Activated CD4-positive, alpha-beta memory T cell treated with anti-CD3 and anti-CD28 coated beads for 36 hours (primary cell): ENCODE measurements at regions of chr7 and their contacts with region 1.

Region 1: DNA sequence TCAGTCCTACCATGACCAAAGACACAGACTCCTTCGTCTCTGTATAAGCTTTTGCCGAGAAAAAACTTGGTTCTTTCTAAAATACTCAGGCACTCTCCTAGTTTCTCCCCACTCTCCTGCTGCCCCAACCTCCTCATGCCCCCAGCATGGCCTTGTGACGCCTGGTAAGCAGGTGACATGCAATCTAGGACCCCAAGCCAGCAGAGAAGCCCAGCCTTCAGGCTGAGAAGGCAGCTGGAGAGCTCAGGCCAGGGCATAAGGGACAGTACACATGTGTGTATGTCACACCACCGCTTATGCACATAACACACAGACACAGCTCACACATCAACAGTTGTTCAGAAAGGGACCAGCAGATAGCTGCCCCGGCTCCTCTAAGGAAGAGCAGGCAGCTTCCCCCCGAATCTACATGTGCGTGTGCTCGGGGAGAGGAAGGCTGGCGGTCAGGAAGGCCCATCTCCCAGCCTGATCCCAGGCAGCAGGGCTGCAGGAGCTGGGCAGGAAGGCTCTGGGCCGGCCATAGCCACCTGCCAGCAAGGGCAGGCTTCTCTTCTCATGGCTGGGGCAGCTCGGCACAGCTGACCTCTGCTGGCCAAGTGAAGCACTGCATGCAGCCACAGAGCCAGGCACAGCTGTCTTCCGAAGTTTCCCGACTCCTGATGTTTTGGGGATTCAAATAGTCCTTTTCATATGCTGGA is 8.5 kb downstream of the DDX56 start:
- DNase-seq: peak; percentile 77
- H3K4me3 Mint-ChIP-seq: no peak overlapping the region
- H3K27ac Mint-ChIP-seq: peak overlapping the region; percentile 23
- H3K4me1 Mint-ChIP-seq: peaks cover 10% of the 10 kb centered on the region
- H3K27me3 Mint-ChIP-seq: no peaks in the 10 kb centered on the region

Region 2: DNA sequence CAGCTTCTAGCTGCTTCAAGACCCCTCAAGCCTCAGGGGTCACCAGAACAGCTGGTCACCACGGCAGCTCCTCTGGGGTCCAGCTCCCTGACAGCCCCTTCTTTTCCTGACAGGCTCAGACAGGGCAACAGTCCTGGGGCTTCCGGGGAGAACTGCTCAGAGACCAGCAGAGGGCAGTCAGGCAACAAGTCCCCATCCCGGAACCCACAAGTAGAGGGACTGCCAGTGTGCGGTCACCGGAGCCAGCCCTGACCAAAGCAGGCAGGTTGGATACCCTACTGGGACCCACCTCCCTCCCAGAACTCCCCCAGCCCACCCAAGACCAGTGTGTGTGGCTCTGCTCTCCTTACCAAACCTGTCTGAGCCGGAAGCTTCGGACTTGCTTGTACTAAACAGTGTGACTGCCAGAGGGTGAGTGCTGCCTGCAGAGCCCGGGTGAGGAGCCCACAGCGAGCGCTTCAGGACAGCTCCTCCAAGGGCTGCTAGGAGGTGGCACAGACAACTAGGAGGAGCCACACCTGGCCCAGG is 324.2 kb before region 1 on chr7:
- CTCF ChIA-PET with region 1: interaction called, 43 read pairs
- POLR2A ChIA-PET with region 1: no interaction called
- intact Hi-C with region 1: loop called (anchors 1 kb)
- DNase-seq: peak; percentile 77
- H3K4me3 Mint-ChIP-seq: no peak overlapping the region
- H3K27ac Mint-ChIP-seq: no peak overlapping the region
- H3K4me1 Mint-ChIP-seq: no peaks in the 10 kb centered on the region
- H3K27me3 Mint-ChIP-seq: no peaks in the 10 kb centered on the region

Region 3: GRCh38 chr7:44257618-44258422 is 307.4 kb before region 1 on chr7:
- CTCF ChIA-PET with region 1: interaction called, 12 read pairs
- POLR2A ChIA-PET with region 1: no interaction called
- intact Hi-C with region 1: no loop called
- DNase-seq: peak; percentile 90
- H3K4me3 Mint-ChIP-seq: peak overlapping the region; percentile 52
- H3K27ac Mint-ChIP-seq: peak overlapping the region; percentile 90
- H3K4me1 Mint-ChIP-seq: peaks cover 38% of the 10 kb centered on the region
- H3K27me3 Mint-ChIP-seq: no peaks in the 10 kb centered on the region

Region 4: DNA sequence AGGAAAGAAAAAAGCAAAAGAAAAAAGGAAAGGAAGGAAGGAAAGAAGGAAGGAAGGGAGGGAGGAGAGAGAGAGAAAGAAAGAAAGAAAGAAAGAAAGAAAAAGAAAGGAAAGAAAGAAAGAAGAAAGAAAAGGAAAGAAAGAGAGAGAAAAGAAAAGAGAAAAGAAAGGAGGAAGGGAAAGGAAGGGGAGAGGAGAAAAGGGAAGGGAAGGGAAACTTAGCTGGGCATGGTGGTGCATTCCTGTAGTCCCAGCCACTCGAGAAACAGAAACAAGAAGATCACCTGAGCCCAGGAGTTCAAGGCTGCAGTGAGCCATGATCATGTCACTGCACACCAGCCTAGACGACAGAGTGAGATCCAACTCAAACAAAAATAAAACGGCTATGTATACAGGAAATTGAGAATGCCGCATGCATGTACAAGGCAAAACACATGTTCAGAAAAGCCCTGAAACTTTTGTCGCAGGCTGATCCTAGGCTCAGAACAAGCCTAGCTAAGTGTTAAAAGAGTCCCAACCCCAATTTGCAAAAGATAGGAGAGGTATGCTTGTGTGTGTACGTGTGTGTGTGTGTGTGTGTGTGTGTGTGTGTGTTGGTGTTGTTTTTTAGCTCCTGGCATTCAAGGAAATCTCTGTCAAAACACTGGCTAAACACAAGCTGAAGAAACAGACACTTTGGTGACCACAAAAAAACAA is 17.6 kb before region 1 on chr7:
- CTCF ChIA-PET with region 1: interaction called, 25 read pairs
- POLR2A ChIA-PET with region 1: no interaction called
- intact Hi-C with region 1: no loop called
- DNase-seq: no peak
- H3K4me3 Mint-ChIP-seq: no peak overlapping the region
- H3K27ac Mint-ChIP-seq: no peak overlapping the region
- H3K4me1 Mint-ChIP-seq: peaks cover 11% of the 10 kb centered on the region
- H3K27me3 Mint-ChIP-seq: peaks cover 1% of the 10 kb centered on the region

Region 5: GRCh38 chr7:44581879-44582603 is 16.8 kb after region 1 on chr7 and contains the start of gene TMED4:
- CTCF ChIA-PET with region 1: interaction called, 17 read pairs
- POLR2A ChIA-PET with region 1: interaction called, 4 read pairs
- intact Hi-C with region 1: no loop called
- DNase-seq: peak; percentile 100
- H3K4me3 Mint-ChIP-seq: peak within 1 kb of the TSS; percentile 91
- H3K27ac Mint-ChIP-seq: peak within 1 kb of the TSS; percentile 91
- H3K4me1 Mint-ChIP-seq: peaks cover 29% of the 10 kb centered on the region
- H3K27me3 Mint-ChIP-seq: peaks cover 3% of the 10 kb centered on the region
- total RNA-seq, gene TMED4: 74.8 to 79.1 TPM

Region 6: GRCh38 chr7:44891372-44891771 is 326.1 kb after region 1 on chr7:
- CTCF ChIA-PET with region 1: no interaction called
- POLR2A ChIA-PET with region 1: no interaction called
- intact Hi-C with region 1: no loop called
- DNase-seq: peak; percentile 69
- H3K4me3 Mint-ChIP-seq: no peak overlapping the region
- H3K27ac Mint-ChIP-seq: peak overlapping the region; percentile 96
- H3K4me1 Mint-ChIP-seq: peaks cover 35% of the 10 kb centered on the region
- H3K27me3 Mint-ChIP-seq: no peaks in the 10 kb centered on the region